ENCODE measurements at regions of chr7 and their contacts with region 1.

Region 1: GRCh38 chr7:73522105-73522872 is at the start of gene BAZ1B:
- DNase-seq: peak; percentile 90
- ATAC-seq: peak; percentile 92
- H3K4me3 Mint-ChIP-seq: peak within 1 kb of the TSS; percentile 95
- H3K27ac Mint-ChIP-seq: peak within 1 kb of the TSS; percentile 97
- H3K4me1 Mint-ChIP-seq: peaks cover 64% of the 10 kb centered on the region
- H3K27me3 Mint-ChIP-seq: no peaks in the 10 kb centered on the region
- CTCF ChIP-seq: no peak
- total RNA-seq, gene BAZ1B: 53.6 and 59.1 TPM in 2 replicates

Region 2: GRCh38 chr7:73433924-73434700 is 88.2 kb before region 1 on chr7:
- CTCF ChIA-PET with region 1: no interaction called
- POLR2A ChIA-PET with region 1: no interaction called
- intact Hi-C with region 1: loop called (anchors 1 kb)
- DNase-seq: no peak
- ATAC-seq: peak; percentile 38
- H3K4me3 Mint-ChIP-seq: peak overlapping the region; percentile 61
- H3K27ac Mint-ChIP-seq: no peak overlapping the region
- H3K4me1 Mint-ChIP-seq: peaks cover 6% of the 10 kb centered on the region
- H3K27me3 Mint-ChIP-seq: peaks cover 8% of the 10 kb centered on the region
- CTCF ChIP-seq: no peak

Region 3: DNA sequence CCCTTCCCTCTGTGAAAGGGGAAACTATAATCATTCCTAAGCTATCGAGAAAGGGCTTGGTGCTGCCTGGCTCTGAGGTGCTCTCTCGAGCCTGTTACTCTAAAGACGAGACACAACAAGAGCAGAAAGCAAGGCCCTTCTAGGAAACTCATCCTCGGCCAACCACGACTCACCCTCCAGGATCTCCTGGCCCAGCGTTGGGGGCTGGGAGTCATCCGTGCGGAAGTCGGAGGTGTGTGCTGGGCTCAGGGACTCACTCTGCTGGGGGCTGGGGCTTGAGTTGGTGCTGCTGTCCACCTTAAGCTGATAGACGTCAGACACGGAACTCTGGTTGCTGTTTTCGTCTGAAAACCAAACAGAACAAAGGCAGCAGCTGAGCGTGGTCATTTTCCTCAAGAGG is 17.4 kb after region 1 on chr7:
- CTCF ChIA-PET with region 1: no interaction called
- POLR2A ChIA-PET with region 1: no interaction called
- intact Hi-C with region 1: no loop called
- DNase-seq: no peak
- ATAC-seq: no peak
- H3K4me3 Mint-ChIP-seq: no peak overlapping the region
- H3K27ac Mint-ChIP-seq: no peak overlapping the region
- H3K4me1 Mint-ChIP-seq: no peaks in the 10 kb centered on the region
- H3K27me3 Mint-ChIP-seq: no peaks in the 10 kb centered on the region
- CTCF ChIP-seq: no peak

Region 4: DNA sequence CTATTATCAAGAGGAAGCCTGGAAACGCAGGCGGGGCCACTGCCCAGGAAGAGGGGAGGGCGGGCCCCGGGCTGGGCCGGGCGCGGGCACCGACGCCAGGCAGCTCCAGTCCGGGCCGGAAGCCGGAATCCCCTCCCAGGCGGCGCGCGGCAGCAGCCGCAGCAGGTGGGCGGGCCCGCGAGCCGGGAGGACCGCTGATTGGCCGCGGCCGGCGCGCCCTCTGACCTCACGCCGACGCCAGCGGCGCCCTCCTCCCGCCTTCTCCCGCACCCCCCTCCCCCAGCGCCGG is 34.8 kb after region 1 on chr7:
- CTCF ChIA-PET with region 1: no interaction called
- POLR2A ChIA-PET with region 1: interaction called, 29 read pairs
- intact Hi-C with region 1: loop called (anchors 1 kb)
- DNase-seq: peak; percentile 87
- ATAC-seq: peak; percentile 90
- H3K4me3 Mint-ChIP-seq: peak overlapping the region; percentile 90
- H3K27ac Mint-ChIP-seq: peak overlapping the region; percentile 87
- H3K4me1 Mint-ChIP-seq: peaks cover 28% of the 10 kb centered on the region
- H3K27me3 Mint-ChIP-seq: no peaks in the 10 kb centered on the region
- CTCF ChIP-seq: no peak

Region 5: DNA sequence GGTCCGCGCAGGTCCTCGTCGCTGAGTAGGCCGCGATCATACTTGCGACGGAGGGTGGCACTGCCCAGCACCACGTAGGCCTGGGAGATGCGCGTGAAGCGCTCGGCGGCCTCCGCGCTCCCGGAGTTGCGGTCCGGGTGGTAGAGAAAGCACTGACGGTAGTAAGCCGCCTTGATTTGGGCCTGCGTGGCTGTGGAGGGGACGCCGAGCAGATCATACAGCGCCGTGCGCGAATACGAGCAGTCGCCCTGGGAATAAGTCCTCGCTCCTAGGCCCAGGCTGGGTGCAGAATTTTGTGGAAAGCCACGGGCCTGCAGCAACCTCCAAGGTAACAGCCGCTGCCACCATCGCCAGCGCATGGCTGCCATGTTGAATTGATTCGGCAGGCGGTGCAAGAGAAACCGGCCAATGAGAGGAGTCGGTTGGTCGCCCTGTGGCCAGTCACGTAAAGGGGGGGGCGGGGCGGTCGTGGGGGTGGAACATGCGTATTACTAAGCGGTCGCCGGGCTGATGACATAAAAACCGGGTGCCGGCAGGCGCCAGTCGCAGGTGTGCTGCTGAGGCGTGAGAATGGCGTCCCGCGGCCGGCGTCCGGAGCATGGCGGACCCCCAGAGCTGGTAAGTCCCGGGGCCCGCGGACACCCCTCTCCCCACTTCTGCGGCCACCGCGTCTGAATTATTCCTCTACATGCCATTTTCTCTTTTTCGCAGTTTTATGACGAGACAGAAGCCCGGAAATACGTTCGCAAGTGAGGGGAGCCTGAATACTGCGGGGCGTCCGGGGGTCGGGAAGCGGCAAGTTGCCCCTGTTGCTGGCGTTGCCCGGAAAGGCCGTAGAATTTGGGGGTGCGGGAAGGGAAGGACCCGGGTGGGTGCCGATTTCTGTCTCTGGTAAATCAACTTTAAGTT is 161.0 kb after region 1 on chr7 and contains the starts of genes BUD23 and DNAJC30:
- CTCF ChIA-PET with region 1: no interaction called
- POLR2A ChIA-PET with region 1: no interaction called
- intact Hi-C with region 1: loop called (anchors 1 kb)
- DNase-seq: peak; percentile 81
- ATAC-seq: peak; percentile 98
- H3K4me3 Mint-ChIP-seq: peak within 1 kb of the TSS; percentile 97
- H3K27ac Mint-ChIP-seq: peak within 1 kb of the TSS; percentile 95
- H3K4me1 Mint-ChIP-seq: peaks cover 29% of the 10 kb centered on the region
- H3K27me3 Mint-ChIP-seq: no peaks in the 10 kb centered on the region
- CTCF ChIP-seq: no peak
- total RNA-seq, gene BUD23: 69.0 and 74.8 TPM in 2 replicates
- total RNA-seq, gene DNAJC30: 13.7 and 14.2 TPM in 2 replicates

Measured in activated B cell treated with CpG ODN at 0.5 μM for 24 hours (primary cell).